KBM-7 (cell line): ENCODE measurements at regions of chr19 and their contacts with region 1.

Region 1: DNA sequence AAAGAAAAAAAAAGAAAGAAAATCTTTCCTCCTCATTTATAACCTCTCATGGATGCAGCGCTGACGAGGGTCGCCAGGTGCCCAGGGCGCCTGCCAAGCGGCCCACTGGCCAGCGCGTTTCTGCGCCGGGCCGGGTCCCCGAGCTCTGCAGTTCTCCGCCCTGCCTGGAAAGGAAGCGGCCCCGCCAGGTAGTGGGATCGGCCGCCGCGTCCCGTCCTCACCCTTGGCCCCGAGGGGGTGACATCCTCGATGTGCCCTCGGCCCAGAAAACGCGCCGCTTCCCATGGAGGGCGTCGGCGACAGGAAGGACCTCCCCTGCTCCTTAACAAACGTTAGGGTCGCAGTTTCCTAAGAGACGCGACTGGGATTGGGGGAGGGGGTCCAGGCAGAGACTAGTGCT is 56.9 kb downstream of the ZNF726 start:
- DNase-seq: no peak

Region 2: GRCh38 chr19:23470873-23471545 is 500.6 kb before region 1 on chr19:
- in situ Hi-C with region 1: loop called (anchors 5 kb)
- DNase-seq: no peak

Region 3: GRCh38 chr19:23832717-23833327 is 138.8 kb before region 1 on chr19:
- in situ Hi-C with region 1: no loop called
- DNase-seq: no peak

Region 4: GRCh38 chr19:23872282-23872919 is 99.2 kb before region 1 on chr19:
- in situ Hi-C with region 1: loop called (anchors 5 kb)
- DNase-seq: no peak

Region 5: DNA sequence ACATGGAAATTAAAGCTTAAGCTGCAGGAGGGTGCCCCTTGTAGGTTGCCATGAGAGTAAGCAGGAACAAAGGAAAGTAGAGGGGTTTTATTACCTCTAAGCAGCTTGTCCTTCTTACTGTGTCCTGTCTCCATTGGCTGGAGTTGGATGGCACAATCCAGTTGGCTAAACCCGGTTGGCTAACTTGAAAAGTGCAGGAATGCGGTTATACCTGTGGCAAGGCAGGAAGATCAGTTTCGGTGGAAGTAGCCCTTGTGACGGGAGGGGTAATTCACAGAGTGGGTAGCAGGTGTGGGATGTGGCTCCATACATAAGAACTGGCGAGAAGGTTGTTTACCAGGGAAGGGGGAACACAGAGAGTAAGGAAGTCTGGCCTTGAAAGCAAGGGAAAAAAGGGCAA is 53.7 kb before region 1 on chr19:
- in situ Hi-C with region 1: no loop called
- DNase-seq: no peak

Region 6: GRCh38 chr19:24033301-24033962 is 61.8 kb after region 1 on chr19:
- in situ Hi-C with region 1: no loop called
- DNase-seq: peak; percentile 92